RWPE1 (cell line): ENCODE measurements at regions of chr16 and their contacts with region 1.

Region 1: DNA sequence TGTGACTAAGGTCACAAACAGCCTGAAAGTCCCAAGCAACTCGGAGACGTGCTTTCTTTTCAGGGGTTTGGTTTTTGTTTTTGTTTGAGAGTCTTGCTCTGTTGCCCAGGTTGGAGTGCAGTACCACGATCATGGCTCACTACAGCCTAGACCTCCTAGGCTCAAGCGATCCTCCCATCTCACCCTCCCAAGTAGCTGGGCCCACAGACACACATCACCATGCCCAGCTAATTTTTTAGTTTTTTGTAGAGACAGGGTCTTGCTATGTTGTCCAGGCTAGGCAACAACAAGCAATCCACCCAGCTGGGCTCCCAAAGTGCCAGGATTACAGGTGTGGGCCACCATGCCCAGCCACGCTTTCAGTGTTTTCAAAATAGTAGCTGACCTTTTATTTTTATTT is 19.8 kb upstream of the GGA2 start:
- DNase-seq: no peak
- H3K27ac ChIP-seq: no peak overlapping the region
- CTCF ChIP-seq: no peak

Region 2: DNA sequence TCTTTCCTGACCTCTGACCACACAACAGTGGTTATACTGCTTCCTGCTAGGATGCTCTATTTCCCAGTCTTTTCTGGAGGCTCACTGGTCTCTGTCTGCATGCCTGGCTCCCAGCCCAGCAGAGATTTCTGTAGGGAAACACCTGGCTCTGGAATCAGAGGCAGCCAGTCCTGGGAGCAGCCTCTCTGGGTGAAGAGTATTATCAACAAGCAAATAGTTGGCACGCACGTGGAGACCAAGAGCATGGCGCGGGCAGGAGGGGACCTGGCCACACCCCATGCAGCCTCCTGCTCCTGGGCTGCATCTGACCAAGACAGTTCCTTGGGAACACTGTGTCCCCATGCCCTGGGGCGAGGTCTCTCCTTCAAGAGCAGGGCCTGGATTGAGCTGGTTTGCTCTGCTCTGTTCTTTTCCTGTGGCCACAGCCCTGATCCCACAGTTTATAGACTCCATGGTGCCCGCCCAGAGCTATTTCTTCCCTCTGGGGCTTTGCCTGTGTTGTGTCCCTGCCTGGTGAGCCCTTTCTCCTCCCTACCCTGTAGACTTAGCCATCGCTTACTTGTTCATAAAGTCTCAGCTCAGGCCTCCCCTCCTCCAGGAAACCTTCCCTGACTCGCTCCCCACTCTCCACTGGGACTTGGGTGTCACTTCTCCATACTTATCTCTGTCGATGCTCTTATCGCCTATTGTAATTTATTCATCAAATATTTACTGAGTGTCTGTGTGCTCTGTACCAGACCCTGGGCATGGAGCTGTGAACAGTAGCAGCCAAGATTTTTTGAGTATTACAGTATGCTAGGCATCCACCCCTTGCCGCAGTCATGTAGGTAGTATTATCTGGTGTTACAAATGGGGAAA is 167.4 kb before region 1 on chr16:
- CTCF ChIA-PET with region 1: interaction called, 13 read pairs
- POLR2A ChIA-PET with region 1: no interaction called
- DNase-seq: peak; percentile 25
- H3K27ac ChIP-seq: peak overlapping the region; percentile 92
- CTCF ChIP-seq: no peak